ENCODE measurements at regions of chr20 and their contacts with region 1.

Region 1: GRCh38 chr20:38893565-38894090 is 32.6 kb upstream of the FAM83D start:
- DNase-seq: peak; percentile 76
- ATAC-seq: peak; percentile 77
- H3K4me3 Mint-ChIP-seq: peak overlapping the region; percentile 45
- H3K27ac Mint-ChIP-seq: peak overlapping the region; percentile 86
- H3K4me1 Mint-ChIP-seq: peaks cover 64% of the 10 kb centered on the region
- H3K27me3 Mint-ChIP-seq: no peaks in the 10 kb centered on the region
- CTCF ChIP-seq: peak; percentile 78

Region 2: DNA sequence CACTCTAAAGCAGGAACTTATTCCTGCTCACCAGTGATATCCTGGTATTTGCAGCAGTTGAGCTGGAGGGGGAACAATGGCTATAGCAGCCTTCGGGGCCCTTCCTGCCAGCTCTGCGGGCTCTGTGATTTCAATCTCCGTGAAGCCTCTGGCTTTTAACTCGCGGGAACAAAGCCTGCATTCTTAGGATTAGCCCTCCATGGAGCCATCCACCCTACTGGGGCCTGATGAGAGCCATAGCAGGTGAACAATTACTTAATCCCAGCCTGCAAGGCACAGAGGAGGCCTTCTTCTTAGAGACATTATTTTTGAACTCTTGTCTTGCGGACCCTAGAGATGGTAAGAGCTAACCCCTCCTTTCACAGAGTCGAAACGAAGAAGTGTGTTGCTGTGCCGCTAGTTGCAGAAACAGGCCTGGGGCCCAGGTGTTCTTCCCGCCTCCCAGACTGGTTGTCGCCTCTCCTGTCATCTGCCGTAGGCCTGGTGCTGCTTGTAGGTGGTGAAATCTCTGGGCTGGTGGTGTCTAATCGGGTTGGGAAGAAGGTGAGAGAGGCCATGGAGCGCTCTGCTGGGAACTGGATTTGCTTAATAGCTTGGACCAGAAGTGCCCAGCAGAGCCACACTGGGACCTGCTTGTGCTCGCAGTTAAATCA is 1641.7 kb before region 1 on chr20:
- CTCF ChIA-PET with region 1: no interaction called
- POLR2A ChIA-PET with region 1: no interaction called
- intact Hi-C with region 1: no loop called
- DNase-seq: no peak
- ATAC-seq: no peak
- H3K4me3 Mint-ChIP-seq: no peak overlapping the region
- H3K27ac Mint-ChIP-seq: no peak overlapping the region
- H3K4me1 Mint-ChIP-seq: no peaks in the 10 kb centered on the region
- H3K27me3 Mint-ChIP-seq: no peaks in the 10 kb centered on the region
- CTCF ChIP-seq: no peak

Region 3: GRCh38 chr20:38645980-38646858 is 247.4 kb before region 1 on chr20:
- CTCF ChIA-PET with region 1: interaction called, 4 read pairs
- POLR2A ChIA-PET with region 1: interaction called, 3 read pairs
- intact Hi-C with region 1: loop called (anchors 1 kb)
- DNase-seq: peak; percentile 93
- ATAC-seq: peak; percentile 98
- H3K4me3 Mint-ChIP-seq: peak overlapping the region; percentile 81
- H3K27ac Mint-ChIP-seq: no peak overlapping the region
- H3K4me1 Mint-ChIP-seq: peaks cover 22% of the 10 kb centered on the region
- H3K27me3 Mint-ChIP-seq: peaks cover 30% of the 10 kb centered on the region
- CTCF ChIP-seq: peak; percentile 45

Region 4: GRCh38 chr20:38790200-38791053 is 103.2 kb before region 1 on chr20:
- CTCF ChIA-PET with region 1: interaction called, 35 read pairs
- POLR2A ChIA-PET with region 1: no interaction called
- intact Hi-C with region 1: loop called (anchors 1 kb)
- DNase-seq: no peak
- ATAC-seq: peak; percentile 81
- H3K4me3 Mint-ChIP-seq: peak overlapping the region; percentile 26
- H3K27ac Mint-ChIP-seq: no peak overlapping the region
- H3K4me1 Mint-ChIP-seq: peaks cover 4% of the 10 kb centered on the region
- H3K27me3 Mint-ChIP-seq: no peaks in the 10 kb centered on the region
- CTCF ChIP-seq: peak; percentile 30

Region 5: GRCh38 chr20:38863024-38863851 is 30.4 kb before region 1 on chr20:
- CTCF ChIA-PET with region 1: interaction called, 11 read pairs
- POLR2A ChIA-PET with region 1: interaction called, 33 read pairs
- intact Hi-C with region 1: loop called (anchors 1 kb)
- DNase-seq: peak; percentile 52
- ATAC-seq: peak; percentile 78
- H3K4me3 Mint-ChIP-seq: peak overlapping the region; percentile 76
- H3K27ac Mint-ChIP-seq: peak overlapping the region; percentile 95
- H3K4me1 Mint-ChIP-seq: peaks cover 94% of the 10 kb centered on the region
- H3K27me3 Mint-ChIP-seq: no peaks in the 10 kb centered on the region
- CTCF ChIP-seq: no peak

Region 6: DNA sequence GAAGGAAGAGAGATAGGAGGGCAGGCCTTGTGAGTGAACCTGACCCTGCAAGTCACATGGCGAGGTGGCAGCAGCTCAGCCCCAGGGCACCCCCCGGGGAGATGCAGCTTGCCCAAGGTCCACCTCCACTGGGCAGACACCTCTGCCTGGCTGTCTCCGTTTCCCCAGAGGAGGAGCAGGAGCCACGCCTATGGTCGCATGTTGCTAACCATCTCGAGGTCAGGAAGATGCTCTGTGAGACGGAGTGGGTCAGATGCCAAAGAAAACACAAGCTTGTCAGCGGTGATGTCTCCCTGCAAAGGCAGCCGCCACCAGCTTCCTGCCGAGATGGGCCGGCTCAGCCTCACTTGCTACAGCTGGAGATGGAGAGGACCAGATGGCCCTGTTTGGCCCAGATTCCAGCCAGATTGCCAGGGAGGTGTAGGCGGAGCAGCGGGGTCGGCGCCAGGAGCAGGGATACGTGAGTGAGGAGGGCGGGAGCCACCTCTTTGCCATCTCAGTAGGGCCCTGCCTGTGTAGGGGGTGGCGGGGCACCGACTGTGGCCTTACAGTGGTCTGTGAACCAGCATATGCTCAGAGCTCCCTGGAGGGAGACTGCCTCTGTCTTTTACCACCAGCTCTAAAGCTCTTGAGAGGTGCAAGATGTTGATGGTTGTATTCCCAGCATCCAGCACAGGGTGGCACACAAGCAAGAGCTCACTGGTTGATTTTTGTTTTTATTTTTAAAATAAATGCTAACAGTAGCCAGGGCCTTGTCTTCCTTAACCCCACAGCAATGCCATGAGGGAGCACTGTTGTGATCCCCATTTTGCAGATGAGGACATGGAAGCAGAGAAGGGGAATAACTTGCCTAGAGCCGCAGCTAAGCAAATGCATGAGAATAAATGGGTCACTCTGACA is 10.3 kb before region 1 on chr20:
- CTCF ChIA-PET with region 1: interaction called, 48 read pairs
- POLR2A ChIA-PET with region 1: interaction called, 62 read pairs
- intact Hi-C with region 1: loop called (anchors 1 kb)
- DNase-seq: no peak
- ATAC-seq: no peak
- H3K4me3 Mint-ChIP-seq: peak overlapping the region; percentile 24
- H3K27ac Mint-ChIP-seq: peak overlapping the region; percentile 91
- H3K4me1 Mint-ChIP-seq: peaks cover 92% of the 10 kb centered on the region
- H3K27me3 Mint-ChIP-seq: no peaks in the 10 kb centered on the region
- CTCF ChIP-seq: no peak

Measured in activated B cell treated with CpG ODN at 0.5 μM for 24 hours (primary cell).